CD4-positive, alpha-beta memory T cell (primary cell): ENCODE measurements at regions of chr10 and their contacts with region 1.

Region 1: GRCh38 chr10:91632671-91633550 is at the start of gene PPP1R3C:
- DNase-seq: peak; percentile 9 to 42 (median 15)
- H3K4me3 ChIP-seq: peak within 1 kb of the TSS in 1 of 2 donors; percentile 12
- H3K4me3 Mint-ChIP-seq: peak within 1 kb of the TSS; percentile 44 to 75 (median 68)
- H3K27ac ChIP-seq: no peak within 1 kb of the TSS
- H3K27ac Mint-ChIP-seq: no peak within 1 kb of the TSS
- H3K4me1 ChIP-seq: peaks cover 4% of the 10 kb centered on the region
- H3K4me1 Mint-ChIP-seq: peaks cover 0 to 8% (median 5%) of the 10 kb centered on the region in 4 donors
- H3K27me3 ChIP-seq: peaks cover 25% of the 10 kb centered on the region
- H3K27me3 Mint-ChIP-seq: peaks cover 44 to 47% of the 10 kb centered on the region in 2 donors
- total RNA-seq, gene PPP1R3C: not detected

Region 2: DNA sequence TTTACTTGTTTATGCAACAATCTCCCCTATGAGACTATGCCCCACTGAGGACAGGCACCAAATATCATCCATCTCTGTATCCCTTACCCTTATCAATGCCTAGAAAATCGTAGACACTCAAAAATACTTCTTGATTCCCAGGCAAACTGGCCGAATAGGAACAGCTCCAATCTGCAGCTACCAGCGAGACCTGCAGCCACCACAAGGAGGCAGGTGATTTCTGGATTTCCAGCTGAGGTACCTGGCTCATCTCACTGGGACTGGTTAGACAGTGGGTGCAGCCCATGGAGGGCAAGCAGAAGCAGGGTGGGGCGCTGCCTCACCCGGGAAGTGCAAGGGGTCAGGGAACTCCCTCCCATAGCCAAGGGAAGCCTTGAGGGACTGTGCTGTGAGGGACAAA is 10.8 kb after region 1 on chr10:
- CTCF ChIA-PET with region 1: interaction called, 10 read pairs
- POLR2A ChIA-PET with region 1: no interaction called
- intact Hi-C with region 1: no loop called
- DNase-seq: no peak
- H3K4me3 ChIP-seq: no peak overlapping the region
- H3K4me3 Mint-ChIP-seq: no peak overlapping the region
- H3K27ac ChIP-seq: no peak overlapping the region
- H3K27ac Mint-ChIP-seq: no peak overlapping the region
- H3K4me1 ChIP-seq: no peaks in the 10 kb centered on the region
- H3K4me1 Mint-ChIP-seq: no peaks in the 10 kb centered on the region
- H3K27me3 ChIP-seq: no peaks in the 10 kb centered on the region
- H3K27me3 Mint-ChIP-seq: peaks cover 33 to 35% of the 10 kb centered on the region in 2 donors